Activated CD4-positive, alpha-beta T cell treated with anti-CD3 and anti-CD28 coated beads, Interleukin-2, amount 10 ng/mL, durations not matched to agents 7 days and 5 days (primary cell): ENCODE measurements at regions of chr10 and their contacts with region 1.

Region 1: DNA sequence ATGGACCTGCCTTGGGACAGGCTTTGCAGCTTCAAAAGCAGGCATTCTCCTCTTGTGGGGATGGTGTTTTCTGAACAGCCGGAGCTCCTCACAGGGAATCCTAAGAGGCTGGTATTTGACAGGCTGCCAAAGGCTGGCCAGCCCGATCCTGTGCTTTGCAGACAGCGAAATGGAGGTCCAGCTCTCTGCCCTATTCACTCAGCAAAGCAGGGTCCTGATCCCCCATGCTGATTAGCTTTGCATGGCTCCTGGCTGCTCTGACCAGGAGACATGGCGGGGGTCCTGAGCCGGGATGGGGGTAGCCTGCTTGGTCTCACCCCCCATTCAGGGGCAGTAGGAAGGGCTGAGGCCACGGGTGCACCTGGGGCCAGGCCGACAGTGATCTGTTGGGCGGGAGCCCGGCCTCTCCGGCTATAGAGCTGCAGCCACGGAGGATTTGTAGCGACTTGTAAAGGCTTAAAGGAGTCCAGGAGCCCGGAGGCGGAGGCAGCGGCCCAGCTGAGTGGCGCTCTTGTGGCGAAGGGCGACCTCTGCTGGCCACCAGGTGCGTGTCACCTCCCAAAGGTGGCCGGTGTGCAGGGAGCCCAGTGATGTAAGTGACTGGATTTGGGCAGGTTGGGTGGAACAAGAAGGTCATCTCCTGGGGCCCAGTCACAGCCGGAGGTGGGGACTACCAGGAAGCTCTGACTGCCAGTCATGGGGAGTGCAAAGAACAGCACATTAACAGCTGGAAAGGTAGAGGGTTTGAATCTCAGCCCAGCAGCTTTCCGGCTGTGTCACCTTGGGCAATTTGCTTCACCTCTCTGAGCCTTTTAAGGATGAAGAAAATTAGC is 126.5 kb downstream of the ZMIZ1 start:
- DNase-seq: peak; percentile 76
- H3K4me3 Mint-ChIP-seq: no peak overlapping the region
- H3K27ac Mint-ChIP-seq: no peak overlapping the region
- H3K4me1 Mint-ChIP-seq: peaks cover 2% of the 10 kb centered on the region
- H3K27me3 Mint-ChIP-seq: no peaks in the 10 kb centered on the region

Region 2: DNA sequence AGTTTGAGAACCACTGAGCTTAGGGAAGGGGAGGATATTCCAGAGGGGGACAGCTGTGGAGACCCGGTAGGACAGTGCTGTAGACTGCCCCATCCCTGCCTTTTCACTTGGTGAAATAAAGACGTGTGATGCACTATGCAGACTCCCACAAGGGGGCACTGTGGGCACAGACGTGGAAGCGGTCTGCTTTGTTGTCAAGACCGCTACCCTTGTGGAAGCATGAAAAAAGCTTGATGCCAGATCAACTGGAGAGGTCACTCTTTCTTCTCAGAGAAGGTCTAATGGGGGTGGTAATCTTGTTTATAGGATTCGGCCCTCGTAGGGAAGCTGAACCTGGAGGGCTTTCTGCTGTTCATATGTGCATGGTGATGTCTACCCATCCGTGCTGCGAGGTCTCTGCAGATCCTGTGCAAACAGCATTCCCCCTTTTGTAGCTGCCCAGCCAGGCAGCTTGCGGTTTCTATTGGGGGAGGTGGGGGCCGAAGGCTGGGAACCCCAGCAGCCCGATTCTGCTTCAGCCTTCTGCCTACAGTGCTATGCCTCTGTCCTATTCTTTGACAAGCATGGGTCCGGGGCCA is 1147.9 kb before region 1 on chr10:
- CTCF ChIA-PET with region 1: interaction called, 17 read pairs
- POLR2A ChIA-PET with region 1: no interaction called
- DNase-seq: peak; percentile 88
- H3K4me3 Mint-ChIP-seq: no peak overlapping the region
- H3K27ac Mint-ChIP-seq: no peak overlapping the region
- H3K4me1 Mint-ChIP-seq: peaks cover 23% of the 10 kb centered on the region
- H3K27me3 Mint-ChIP-seq: no peaks in the 10 kb centered on the region

Region 3: DNA sequence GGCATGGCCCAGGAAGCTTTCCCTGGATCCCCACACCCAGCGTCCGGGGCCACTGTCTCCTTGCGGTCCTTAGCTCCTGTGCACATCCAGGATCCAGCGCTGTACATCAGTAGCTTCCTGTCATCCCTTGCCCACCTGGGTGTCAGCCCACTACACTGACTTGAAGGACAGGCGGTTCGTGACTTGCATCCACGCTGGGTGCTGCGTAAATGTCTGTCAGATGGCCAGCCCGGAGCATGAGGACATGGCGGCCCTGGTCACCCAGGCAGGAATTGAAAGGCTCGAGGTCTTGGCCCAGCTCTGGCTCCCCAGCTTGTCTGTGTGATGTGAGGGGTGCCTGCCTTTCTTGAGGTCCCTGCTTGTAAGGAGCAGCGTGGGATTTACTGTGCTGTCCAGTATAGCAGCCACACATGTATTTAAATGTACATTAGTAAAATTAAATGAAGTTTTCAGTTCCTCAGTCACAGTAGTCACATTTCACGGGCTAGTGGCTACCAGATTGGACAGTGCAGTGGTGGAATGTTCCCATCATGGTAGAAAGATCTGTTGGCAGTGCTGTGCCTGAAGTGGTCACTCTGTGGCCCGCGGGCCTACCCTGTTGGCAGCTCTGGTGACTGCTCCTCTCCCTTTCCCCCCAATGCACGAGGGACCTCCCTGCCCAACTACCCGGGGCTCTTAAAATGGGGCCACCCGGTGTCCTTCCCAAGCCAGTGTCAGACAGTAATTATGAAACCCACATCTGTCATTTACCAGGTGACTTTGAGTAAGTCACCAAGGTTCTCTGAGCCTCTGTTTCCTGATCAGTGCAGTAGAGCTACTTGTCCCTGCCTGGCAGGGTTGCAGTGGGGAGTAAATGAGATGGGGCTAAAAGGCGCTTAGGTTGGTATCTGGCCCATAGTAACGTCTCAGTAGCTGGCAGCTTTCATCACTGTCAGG is 54.1 kb after region 1 on chr10:
- CTCF ChIA-PET with region 1: no interaction called
- POLR2A ChIA-PET with region 1: no interaction called
- DNase-seq: peak; percentile 27
- H3K4me3 Mint-ChIP-seq: peak overlapping the region; percentile 2
- H3K27ac Mint-ChIP-seq: peak overlapping the region; percentile 77
- H3K4me1 Mint-ChIP-seq: peaks cover 69% of the 10 kb centered on the region
- H3K27me3 Mint-ChIP-seq: no peaks in the 10 kb centered on the region

Region 4: GRCh38 chr10:79292891-79293746 is 97.8 kb after region 1 on chr10:
- CTCF ChIA-PET with region 1: no interaction called
- POLR2A ChIA-PET with region 1: no interaction called
- DNase-seq: peak; percentile 31
- H3K4me3 Mint-ChIP-seq: no peak overlapping the region
- H3K27ac Mint-ChIP-seq: no peak overlapping the region
- H3K4me1 Mint-ChIP-seq: peaks cover 30% of the 10 kb centered on the region
- H3K27me3 Mint-ChIP-seq: no peaks in the 10 kb centered on the region